ENCODE measurements at regions of chr1 and their contacts with region 1.

Region 1: GRCh38 chr1:77281491-77282186 is at the start of gene AK5:
- DNase-seq: peak; percentile 46 to 95 (median 64)

Region 2: DNA sequence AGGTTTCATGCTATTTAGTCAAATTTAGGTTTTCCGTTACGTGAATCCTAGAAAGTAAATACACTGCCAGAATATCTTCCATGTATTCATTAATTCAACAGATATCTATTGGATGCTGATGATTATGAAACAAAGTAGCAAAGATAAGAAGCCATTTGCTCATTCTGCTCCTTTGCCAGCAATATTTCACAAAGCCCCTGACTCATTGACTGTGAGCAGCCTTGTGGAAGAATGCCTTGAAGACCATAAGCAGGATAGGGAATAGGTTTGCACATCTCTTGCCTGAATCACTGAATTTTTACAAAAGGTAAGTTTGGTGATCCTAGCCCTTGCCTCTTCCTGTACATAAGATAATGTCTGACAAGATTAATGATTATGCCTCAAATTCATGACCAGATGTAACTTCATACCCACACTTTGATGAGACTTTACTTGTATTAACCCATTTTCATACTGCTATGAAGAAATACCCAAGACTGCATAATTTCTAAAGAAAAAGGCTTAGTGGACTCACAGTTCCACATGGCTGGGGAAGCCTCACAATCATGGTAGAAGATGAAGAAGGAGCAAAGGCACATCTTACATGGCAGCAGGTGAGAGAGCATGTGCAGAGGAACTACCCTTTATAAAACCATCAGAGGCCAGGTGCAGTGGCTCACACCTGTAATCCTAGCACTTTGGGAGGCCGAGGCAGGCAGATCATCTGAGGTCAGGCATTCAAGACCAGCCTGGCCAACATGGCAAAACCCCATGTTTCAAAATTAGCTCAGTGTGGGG is 60.8 kb before region 1 on chr1:
- intact Hi-C with region 1: loop called (anchors 10 kb)
- DNase-seq: no peak

Region 3: GRCh38 chr1:77533660-77534305 is 252.1 kb after region 1 on chr1:
- intact Hi-C with region 1: loop called (anchors 5 kb)
- DNase-seq: peak; percentile 40 to 95 (median 68)